ENCODE measurements at regions of chr19 and their contacts with region 1.

Region 1: DNA sequence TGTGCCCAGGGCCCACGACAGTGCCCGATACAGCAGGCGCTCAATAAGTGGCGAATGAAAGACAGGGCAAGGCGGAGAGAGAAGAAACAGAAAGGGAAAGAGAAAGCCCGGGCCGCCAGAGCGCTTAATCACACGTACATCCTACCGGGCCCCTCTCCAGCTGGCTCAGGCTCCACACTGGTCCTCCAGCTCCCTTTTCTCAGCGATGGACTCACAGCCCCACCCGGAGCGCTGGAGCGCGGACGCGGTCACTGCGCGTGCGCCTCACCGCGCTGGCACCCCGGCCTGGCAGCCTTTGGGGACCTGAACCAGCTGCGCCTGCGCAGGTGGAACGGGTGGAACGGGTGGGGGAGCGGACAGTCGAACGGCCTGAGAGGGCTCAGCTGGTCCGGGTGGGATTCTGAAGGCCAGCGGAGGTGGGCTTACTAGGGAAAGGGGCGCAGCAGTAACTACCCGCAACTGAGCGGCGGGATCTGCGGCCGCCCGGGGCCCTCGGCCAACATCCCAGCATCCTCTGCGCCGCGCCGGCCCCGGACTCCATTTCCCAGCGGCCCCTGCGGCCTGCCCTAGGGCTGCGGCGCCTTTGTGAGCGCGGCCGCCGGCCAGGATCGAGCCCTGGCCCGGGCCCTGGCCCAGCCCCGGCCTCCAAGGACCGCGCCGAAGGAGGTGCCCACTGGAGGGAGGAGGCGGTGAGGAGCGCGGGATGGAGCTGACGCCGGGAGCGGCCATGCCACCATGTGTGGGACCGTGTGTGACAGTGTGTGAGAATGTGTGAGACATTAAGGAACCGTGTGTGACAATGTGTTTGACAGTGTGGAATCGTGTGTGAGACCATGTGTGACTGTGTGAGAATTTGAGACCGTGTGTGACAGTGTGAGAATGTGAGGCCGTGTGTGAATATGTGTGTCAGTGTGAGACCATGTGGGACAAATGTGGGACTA is at the start of gene ZNF583:
- DNase-seq: peak; percentile 97
- ATAC-seq: peak; percentile 99
- total RNA-seq, gene ZNF583: 5.4 TPM

Region 2: DNA sequence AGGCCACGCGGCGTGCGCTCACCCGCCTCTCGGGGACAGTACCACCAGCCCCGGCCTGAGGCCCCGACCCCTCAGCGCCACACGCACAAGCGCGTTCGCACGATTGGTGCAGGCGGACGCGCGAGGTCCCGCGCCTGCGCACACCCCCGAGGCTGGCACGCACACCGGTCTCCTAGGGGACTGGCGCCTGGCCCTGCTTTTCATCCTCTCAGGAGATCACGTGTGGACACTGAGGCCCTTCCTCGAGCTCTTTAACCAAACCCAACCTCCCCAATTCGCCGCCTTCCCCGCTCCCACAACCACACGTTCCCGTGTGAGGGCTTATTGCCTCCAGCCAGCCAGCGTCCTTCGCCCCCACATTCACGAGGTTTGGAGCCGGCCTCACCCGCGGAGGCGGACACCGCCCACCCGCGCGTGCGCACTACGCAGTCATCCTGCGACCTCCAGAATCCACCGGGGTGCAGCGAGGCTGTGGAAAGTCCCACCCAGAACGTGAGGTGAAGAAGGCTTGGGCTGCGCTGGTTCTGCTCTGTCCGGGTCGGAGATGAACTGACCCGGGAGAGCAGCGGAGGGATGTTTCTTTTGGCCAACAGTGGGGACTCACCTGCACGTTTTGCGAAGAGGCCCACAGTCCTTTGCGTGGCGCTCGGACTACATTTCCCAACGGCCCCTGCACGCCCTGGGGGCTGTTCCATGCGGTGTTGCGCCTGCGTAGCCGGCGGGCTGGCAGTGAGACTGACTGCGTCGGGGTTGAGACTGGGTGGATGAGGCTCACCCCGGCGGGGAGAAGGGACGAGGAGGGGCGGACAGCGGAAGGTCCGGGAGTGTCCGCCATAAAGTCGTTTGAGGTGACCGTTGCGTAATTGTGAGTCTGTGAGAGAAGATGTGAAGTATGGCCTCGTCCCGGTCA is 73.7 kb after region 1 on chr19:
- intact Hi-C with region 1: loop called (anchors 5 kb)
- DNase-seq: peak; percentile 94
- ATAC-seq: peak; percentile 97

Region 3: DNA sequence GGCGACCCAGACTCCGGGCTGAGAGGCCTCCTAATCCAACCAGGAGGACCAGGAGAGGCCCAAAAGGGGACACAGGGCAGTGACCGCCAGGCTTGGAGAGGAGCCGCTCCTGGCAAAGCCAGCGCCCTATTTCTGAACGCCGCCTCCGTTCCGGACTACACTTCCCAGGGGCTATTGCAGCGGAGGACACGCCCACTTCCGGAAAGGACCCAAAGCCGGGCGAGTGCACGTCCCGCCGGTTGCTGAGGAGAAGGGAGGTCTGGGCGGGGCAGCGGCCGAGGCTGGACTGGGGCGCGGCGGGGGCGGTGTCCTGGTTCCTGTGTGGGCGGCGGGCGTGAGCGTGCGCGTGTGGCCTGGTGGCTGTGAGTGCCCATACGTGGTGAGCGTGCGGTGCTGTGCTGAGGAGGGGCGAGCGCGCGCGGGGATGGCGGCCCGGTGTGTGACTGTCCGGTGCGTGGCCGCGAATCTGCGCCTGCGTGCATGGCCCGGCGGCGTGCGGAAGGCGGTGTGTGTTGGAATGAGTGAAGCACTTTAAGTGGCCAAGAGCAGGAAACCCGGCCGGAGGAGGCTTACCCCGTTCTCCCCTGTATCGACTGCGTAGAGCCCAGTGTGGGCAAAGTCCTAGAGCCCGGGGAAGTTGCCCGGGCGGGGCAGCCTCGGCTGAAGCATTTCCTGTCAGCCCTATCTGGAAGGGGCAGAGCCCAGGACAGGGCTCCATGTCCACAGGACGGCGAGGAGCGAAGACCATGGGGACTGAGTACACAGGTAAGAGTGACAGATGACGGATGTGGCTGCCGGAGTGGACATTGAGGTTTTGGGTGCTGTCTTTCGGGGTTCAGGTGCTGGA is 163.5 kb after region 1 on chr19 and contains the start of gene ZNF470:
- intact Hi-C with region 1: loop called (anchors 10 kb)
- DNase-seq: peak; percentile 96
- ATAC-seq: peak; percentile 100
- total RNA-seq, gene ZNF470: 2.9 TPM